ENCODE measurements at regions of chr21 and their contacts with region 1.

Region 1: DNA sequence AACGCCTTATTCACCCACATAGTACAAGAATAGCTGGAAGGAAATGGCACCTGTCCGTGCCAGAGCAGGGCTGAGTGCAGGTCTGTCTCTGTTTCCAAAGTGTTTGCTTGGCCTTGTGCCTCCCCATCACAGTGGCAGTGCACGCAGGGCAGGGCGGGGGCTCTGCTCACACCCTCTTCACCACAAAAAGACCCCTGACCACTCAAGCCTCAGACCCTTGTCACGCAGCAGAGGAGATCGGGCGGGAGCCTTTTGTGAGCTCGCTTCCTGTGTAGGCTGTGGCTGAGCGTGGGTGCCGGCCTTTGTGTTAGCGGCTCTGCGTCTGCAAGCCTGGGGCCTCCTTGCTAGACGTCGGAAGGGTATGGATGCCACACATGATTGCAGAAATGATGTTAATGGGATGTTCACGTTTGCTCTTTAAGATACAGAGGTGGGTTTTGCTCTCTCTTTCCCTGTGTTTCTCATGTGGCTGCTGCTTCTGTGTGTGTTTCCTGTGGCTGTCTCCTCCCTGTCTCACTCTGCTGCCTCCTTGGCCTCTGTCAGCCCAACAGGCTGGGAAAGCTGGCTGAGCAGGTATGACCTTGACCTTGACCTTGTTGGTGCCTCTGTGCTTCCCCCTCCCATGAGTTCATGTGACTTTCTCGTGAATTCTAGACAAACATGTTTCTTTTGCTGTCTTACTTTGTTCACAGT is 45.4 kb downstream of the S100B start:
- DNase-seq: peak; percentile 58
- H3K4me3 ChIP-seq: no peak overlapping the region
- H3K27ac ChIP-seq: no peak overlapping the region
- H3K4me1 ChIP-seq: peaks cover 7% of the 10 kb centered on the region
- H3K27me3 ChIP-seq: no peaks in the 10 kb centered on the region
- CTCF ChIP-seq: no peak
- POLR2A ChIP-seq: no peak

Region 2: GRCh38 chr21:46374761-46375389 is 184.6 kb before region 1 on chr21:
- CTCF ChIA-PET with region 1: no interaction called
- POLR2A ChIA-PET with region 1: no interaction called
- dilution Hi-C with region 1: no loop called
- intact Hi-C with region 1: no loop called
- DNase-seq: no peak
- H3K4me3 ChIP-seq: no peak overlapping the region
- H3K27ac ChIP-seq: no peak overlapping the region
- H3K4me1 ChIP-seq: no peaks in the 10 kb centered on the region
- H3K27me3 ChIP-seq: no peaks in the 10 kb centered on the region
- CTCF ChIP-seq: no peak
- POLR2A ChIP-seq: no peak

Region 3: GRCh38 chr21:46483300-46484295 is 75.8 kb before region 1 on chr21:
- CTCF ChIA-PET with region 1: no interaction called
- POLR2A ChIA-PET with region 1: no interaction called
- dilution Hi-C with region 1: no loop called
- intact Hi-C with region 1: no loop called
- DNase-seq: no peak
- H3K4me3 ChIP-seq: no peak overlapping the region
- H3K27ac ChIP-seq: no peak overlapping the region
- H3K4me1 ChIP-seq: no peaks in the 10 kb centered on the region
- H3K27me3 ChIP-seq: no peaks in the 10 kb centered on the region
- CTCF ChIP-seq: no peak
- POLR2A ChIP-seq: no peak

Region 4: DNA sequence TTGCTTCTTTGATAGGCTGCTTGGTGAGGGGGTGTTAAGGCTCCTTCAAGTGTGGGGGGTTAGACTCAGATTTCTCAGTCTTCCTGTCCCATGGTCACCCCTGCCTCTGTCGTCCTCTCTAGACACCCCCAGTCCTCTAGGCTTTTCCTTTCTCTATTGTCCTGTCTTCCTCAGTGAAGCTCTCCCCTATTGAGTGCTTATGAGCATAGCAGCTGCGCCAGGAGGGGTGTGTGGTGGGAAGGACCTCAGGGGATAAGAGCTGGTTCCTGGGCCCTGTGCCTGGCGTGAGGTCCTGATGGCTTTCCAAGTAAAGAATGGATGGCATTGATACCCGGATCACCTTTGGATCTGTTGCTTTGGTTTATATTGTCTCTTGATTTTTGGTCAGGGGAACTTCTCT is 31.6 kb before region 1 on chr21:
- CTCF ChIA-PET with region 1: no interaction called
- POLR2A ChIA-PET with region 1: no interaction called
- dilution Hi-C with region 1: no loop called
- intact Hi-C with region 1: no loop called
- DNase-seq: no peak
- H3K4me3 ChIP-seq: no peak overlapping the region
- H3K27ac ChIP-seq: no peak overlapping the region
- H3K4me1 ChIP-seq: peaks cover 6% of the 10 kb centered on the region
- H3K27me3 ChIP-seq: no peaks in the 10 kb centered on the region
- CTCF ChIP-seq: no peak
- POLR2A ChIP-seq: no peak

Region 5: DNA sequence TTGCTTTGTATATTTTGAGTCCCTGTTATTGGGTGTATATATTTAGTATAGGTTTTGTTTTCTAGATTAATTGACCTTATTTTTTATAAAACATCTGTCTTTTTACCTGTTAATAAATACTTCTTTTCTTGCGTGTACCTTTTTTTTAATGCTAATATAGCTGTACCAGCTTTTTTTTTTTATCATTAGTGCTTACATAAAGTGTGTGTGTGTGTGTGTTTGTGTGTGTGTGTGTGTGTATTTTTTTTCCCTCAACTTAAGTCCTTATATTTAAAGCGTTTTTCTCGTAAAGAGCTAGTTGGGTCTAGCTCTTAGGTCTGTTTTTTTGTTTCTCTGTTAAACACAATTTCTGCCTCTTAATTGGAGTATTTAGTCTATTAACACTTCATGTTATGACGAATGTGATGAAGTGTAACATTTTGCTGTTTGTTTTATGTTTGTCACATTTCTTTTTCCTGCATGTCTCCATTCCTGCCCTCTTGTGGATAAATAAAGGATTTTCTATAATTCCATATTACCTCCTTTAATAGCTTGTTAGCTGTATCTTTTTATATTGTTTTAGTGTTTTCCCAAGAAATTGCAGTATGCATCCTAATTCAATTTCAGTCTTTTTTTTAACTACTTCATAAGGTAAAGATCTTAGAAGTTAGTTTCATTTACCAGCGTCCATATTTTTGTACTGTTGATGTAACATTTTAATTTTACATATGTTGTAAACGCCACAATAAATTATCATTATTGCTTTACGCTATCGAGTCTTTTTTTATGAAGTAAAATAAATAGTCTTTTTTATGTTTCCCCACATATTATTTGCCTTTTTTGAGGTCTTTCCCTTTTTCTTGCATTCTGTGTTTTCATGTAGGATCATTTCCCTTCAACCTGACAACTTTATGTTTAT is 80.3 kb after region 1 on chr21:
- CTCF ChIA-PET with region 1: interaction called, 14 read pairs
- POLR2A ChIA-PET with region 1: no interaction called
- dilution Hi-C with region 1: no loop called
- intact Hi-C with region 1: no loop called
- DNase-seq: peak; percentile 62
- H3K4me3 ChIP-seq: no peak overlapping the region
- H3K27ac ChIP-seq: no peak overlapping the region
- H3K4me1 ChIP-seq: peaks cover 28% of the 10 kb centered on the region
- H3K27me3 ChIP-seq: no peaks in the 10 kb centered on the region
- CTCF ChIP-seq: peak; percentile 11 to 16
- POLR2A ChIP-seq: no peak

Measured in endothelial cell of umbilical vein (primary cell).